Ascending aorta (tissue), 2 donors: ENCODE measurements at regions of chr4 and their contacts with region 1.

Region 1: DNA sequence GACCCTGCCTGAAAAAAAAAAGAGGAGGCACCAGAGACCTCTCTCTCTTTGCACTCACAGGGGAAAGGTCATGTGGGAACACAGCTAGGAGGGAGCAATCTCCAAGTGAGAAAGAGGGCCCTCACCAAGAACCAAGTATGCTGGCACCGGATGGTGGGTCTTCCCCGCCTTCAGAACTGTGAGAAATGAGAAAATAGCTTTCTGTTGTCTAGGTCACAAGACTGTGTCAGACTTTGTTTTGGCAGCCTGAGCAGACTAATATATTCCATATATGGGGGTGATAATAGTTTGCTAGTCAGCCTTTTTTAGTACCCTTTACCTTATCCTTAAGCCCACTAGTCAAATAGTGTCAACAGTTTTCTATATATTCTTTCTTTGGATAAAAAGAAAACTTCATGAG is 193.0 kb downstream of the TRIML1 start:
- DNase-seq: peak in 1 of 2 donors; percentile 77
- H3K4me3 ChIP-seq: no peak overlapping the region
- H3K27ac ChIP-seq: peak overlapping the region; percentile 87 to 88
- H3K4me1 ChIP-seq: peaks cover 0 to 15% of the 10 kb centered on the region in 2 donors
- H3K27me3 ChIP-seq: no peaks in the 10 kb centered on the region
- CTCF ChIP-seq: no peak

Region 2: DNA sequence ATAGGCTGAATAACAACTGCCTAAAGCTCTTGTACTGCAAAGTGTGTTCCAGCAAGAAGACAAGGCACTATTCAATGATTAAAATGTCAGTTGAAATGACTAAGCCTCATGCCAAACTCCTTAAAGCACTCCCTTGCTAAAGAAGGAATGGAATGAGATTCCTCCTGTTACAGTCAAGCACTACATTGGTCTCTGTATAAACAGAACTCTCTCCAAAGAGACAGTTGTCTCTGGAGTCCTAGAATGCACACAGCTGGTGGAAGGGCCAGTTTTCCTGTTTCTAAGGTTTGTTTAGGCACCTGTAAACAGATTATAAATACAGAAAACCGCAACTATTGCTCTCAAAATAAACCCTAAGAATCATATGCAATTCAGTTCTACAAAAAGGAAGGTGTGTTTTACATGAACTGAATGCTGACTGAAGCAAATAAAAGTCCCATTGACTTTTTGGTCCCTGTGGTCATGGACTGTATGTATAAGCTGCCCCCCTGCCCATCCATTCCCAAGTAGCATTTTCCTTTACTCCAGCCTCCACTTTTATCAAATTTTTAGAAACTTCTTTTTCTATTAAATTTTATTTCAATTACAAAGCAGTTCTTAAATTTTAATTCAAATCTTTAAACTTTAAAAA is 1655.6 kb before region 1 on chr4:
- intact Hi-C with region 1: loop called (anchors 10 kb)
- DNase-seq: no peak
- H3K4me3 ChIP-seq: no peak overlapping the region
- H3K27ac ChIP-seq: peak overlapping the region; percentile 14 to 27
- H3K4me1 ChIP-seq: peaks cover 0 to 9% of the 10 kb centered on the region in 2 donors
- H3K27me3 ChIP-seq: no peaks in the 10 kb centered on the region
- CTCF ChIP-seq: no peak

Region 3: DNA sequence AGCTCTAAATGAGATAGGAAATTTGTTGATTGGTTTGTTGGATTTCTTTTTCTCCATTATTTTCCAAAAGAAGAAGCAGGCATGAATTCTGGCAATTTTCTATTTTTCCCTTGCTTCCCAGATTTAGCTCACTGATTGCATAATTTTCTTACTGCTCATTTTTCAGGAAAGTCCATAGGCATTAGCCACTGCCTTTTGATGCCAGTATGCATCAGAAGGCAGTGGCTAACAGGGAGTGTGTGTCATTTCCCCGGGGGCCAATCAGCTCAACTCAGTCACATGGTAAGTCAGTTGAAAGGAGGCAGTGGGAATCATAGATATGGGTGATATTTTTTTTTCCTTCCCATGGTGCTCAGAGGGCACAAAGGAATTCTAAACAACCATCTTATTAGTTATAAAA is 36.4 kb before region 1 on chr4:
- intact Hi-C with region 1: loop called (anchors 2 kb)
- DNase-seq: peak in 1 of 2 donors; percentile 78
- H3K4me3 ChIP-seq: no peak overlapping the region
- H3K27ac ChIP-seq: peak overlapping the region in 1 of 2 donors; percentile 39
- H3K4me1 ChIP-seq: no peaks in the 10 kb centered on the region
- H3K27me3 ChIP-seq: no peaks in the 10 kb centered on the region
- CTCF ChIP-seq: no peak